Activated CD8-positive, alpha-beta memory T cell treated with anti-CD3 and anti-CD28 coated beads, Interleukin-2, amount 10 ng/mL, durations not matched to agents 7 days and 5 days (primary cell): ENCODE measurements at regions of chr1 and their contacts with region 1.

Region 1: GRCh38 chr1:24586970-24587820 is 31.3 kb downstream of the NCMAP start:
- DNase-seq: peak; percentile 69
- ATAC-seq: peak; percentile 95
- H3K4me3 Mint-ChIP-seq: no peak overlapping the region
- H3K27ac Mint-ChIP-seq: peak overlapping the region; percentile 12
- H3K4me1 Mint-ChIP-seq: peaks cover 10% of the 10 kb centered on the region
- H3K27me3 Mint-ChIP-seq: peaks cover 7% of the 10 kb centered on the region

Region 2: GRCh38 chr1:24374891-24375786 is 212.1 kb before region 1 on chr1:
- CTCF ChIA-PET with region 1: no interaction called
- DNase-seq: peak; percentile 36
- ATAC-seq: no peak
- H3K4me3 Mint-ChIP-seq: no peak overlapping the region
- H3K27ac Mint-ChIP-seq: no peak overlapping the region
- H3K4me1 Mint-ChIP-seq: peaks cover 3% of the 10 kb centered on the region
- H3K27me3 Mint-ChIP-seq: no peaks in the 10 kb centered on the region

Region 3: GRCh38 chr1:24438423-24438901 is 148.7 kb before region 1 on chr1:
- CTCF ChIA-PET with region 1: no interaction called
- DNase-seq: no peak
- ATAC-seq: no peak
- H3K4me3 Mint-ChIP-seq: no peak overlapping the region
- H3K27ac Mint-ChIP-seq: no peak overlapping the region
- H3K4me1 Mint-ChIP-seq: no peaks in the 10 kb centered on the region
- H3K27me3 Mint-ChIP-seq: no peaks in the 10 kb centered on the region

Region 4: GRCh38 chr1:24536391-24536840 is 50.8 kb before region 1 on chr1:
- CTCF ChIA-PET with region 1: interaction called, 34 read pairs
- DNase-seq: peak; percentile 83
- ATAC-seq: peak; percentile 61
- H3K4me3 Mint-ChIP-seq: peak overlapping the region; percentile 85
- H3K27ac Mint-ChIP-seq: peak overlapping the region; percentile 97
- H3K4me1 Mint-ChIP-seq: peaks cover 69% of the 10 kb centered on the region
- H3K27me3 Mint-ChIP-seq: no peaks in the 10 kb centered on the region

Region 5: GRCh38 chr1:24541711-24542346 is 45.4 kb before region 1 on chr1:
- CTCF ChIA-PET with region 1: interaction called, 34 read pairs
- DNase-seq: peak; percentile 50
- ATAC-seq: no peak
- H3K4me3 Mint-ChIP-seq: no peak overlapping the region
- H3K27ac Mint-ChIP-seq: peak overlapping the region; percentile 81
- H3K4me1 Mint-ChIP-seq: peaks cover 56% of the 10 kb centered on the region
- H3K27me3 Mint-ChIP-seq: no peaks in the 10 kb centered on the region

Region 6: DNA sequence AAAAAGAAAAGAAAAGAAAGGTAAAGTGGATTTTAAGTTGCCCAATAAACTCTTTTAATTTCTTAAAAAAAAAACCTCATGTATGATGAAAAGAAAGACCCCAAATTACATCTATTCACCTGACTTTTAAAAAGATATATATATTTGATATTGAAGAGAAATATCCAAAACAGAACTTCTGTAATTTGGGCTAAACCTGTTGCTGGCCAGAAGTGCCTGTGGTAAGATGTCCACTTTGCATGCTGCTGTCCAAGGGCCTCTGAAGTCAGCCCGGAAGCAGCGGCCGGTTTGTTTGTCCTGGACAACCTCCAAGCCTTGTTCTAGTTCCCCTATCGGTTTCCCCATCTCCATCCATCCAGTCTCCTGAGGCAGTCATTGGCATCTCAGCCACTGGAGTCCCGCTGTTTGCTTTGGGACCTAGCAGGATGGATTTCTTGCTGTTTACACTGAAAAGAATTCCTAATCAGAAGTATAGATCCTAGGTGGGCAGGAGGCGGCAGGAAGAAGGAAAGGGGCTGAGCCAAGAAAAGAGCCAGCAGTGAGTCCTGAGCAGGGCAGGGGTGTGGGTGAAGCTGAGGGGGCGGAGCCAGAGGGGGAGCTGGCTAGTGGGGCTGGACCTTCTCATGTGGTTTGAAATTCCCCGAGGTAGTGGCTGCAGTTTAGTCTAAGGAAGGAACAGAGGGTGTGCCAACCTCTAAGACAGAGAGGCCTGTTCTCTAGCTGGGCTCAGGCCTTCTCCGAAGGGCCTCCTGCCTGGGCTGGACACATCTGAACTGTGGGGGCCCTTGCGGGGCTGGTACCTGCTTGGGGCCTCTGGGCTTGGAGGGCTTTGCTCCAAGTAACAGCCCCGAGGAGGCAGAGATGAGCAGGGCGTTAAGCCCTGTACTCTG is 28.0 kb before region 1 on chr1:
- CTCF ChIA-PET with region 1: interaction called, 21 read pairs
- DNase-seq: no peak
- ATAC-seq: no peak
- H3K4me3 Mint-ChIP-seq: no peak overlapping the region
- H3K27ac Mint-ChIP-seq: no peak overlapping the region
- H3K4me1 Mint-ChIP-seq: peaks cover 14% of the 10 kb centered on the region
- H3K27me3 Mint-ChIP-seq: peaks cover 50% of the 10 kb centered on the region

Region 7: DNA sequence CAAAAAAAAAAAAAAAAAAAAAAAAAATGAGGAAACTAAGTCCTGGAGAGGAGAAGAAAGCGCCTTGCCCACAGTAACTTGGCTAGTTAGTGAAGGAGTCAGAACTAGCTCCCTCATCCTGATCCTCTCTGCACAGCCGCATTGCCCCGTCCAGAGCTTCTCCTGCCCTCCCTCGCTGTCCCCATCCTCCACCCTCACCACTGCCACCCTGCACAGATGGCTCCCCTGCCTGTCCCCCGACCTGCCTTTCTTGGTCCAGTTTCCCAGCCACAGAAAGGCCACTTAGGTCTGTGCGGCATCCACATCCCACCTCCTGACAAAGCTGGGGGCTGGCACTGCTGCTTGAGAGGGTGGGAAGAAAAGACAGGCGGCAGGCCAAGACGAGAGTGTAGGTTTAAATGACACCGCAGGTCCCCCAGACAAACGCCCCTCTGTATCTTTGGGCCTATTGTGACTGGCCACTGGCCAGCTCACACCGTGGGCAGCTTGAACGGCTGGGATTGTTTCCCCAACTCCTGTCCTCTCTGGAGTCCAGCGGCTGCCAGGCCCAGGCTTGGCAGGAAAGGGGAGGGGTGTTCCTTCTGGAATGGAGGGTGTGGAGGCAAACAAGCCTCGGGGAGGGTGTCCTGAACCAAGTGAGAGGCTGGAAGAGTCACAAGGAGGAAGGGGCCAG is 11.1 kb before region 1 on chr1:
- CTCF ChIA-PET with region 1: interaction called, 12 read pairs
- DNase-seq: no peak
- ATAC-seq: no peak
- H3K4me3 Mint-ChIP-seq: no peak overlapping the region
- H3K27ac Mint-ChIP-seq: no peak overlapping the region
- H3K4me1 Mint-ChIP-seq: peaks cover 13% of the 10 kb centered on the region
- H3K27me3 Mint-ChIP-seq: no peaks in the 10 kb centered on the region

Region 8: GRCh38 chr1:24606298-24607240 is 19.4 kb after region 1 on chr1:
- CTCF ChIA-PET with region 1: interaction called, 16 read pairs
- DNase-seq: no peak
- ATAC-seq: no peak
- H3K4me3 Mint-ChIP-seq: no peak overlapping the region
- H3K27ac Mint-ChIP-seq: no peak overlapping the region
- H3K4me1 Mint-ChIP-seq: peaks cover 2% of the 10 kb centered on the region
- H3K27me3 Mint-ChIP-seq: peaks cover 25% of the 10 kb centered on the region

Region 9: DNA sequence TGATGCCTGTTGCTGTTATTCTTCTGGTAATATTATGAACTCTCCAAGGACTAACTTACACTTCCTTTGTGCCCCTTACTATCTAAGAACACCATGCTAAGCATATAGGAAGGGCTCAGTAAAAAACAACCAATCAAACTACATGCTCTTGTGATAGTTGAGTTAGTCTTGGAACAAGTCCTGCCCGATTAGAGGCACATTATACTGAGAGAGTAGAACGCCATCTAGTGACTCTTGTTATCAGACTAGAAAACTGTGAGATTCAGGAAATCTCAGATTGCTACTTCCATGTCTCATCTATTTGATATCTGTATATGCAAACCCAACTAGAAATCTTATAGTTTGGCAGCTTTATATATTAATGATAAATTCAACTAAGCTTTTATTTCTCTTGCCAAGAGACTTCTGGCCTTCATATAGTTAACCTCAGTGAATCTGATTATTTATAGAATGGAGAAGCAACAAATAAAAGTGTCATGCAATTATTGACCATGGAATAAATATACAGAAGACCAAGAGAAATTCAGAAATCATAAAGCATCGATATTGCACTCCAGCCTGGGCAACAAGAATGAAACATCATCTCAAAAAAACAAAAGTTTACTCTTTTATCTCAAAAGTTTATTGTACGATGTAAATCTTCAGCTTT is 48.1 kb after region 1 on chr1:
- CTCF ChIA-PET with region 1: interaction called, 10 read pairs
- DNase-seq: no peak
- ATAC-seq: peak; percentile 79
- H3K4me3 Mint-ChIP-seq: no peak overlapping the region
- H3K27ac Mint-ChIP-seq: no peak overlapping the region
- H3K4me1 Mint-ChIP-seq: peaks cover 6% of the 10 kb centered on the region
- H3K27me3 Mint-ChIP-seq: peaks cover 32% of the 10 kb centered on the region